ENCODE measurements at regions of chr9 and their contacts with region 1.

Region 1: DNA sequence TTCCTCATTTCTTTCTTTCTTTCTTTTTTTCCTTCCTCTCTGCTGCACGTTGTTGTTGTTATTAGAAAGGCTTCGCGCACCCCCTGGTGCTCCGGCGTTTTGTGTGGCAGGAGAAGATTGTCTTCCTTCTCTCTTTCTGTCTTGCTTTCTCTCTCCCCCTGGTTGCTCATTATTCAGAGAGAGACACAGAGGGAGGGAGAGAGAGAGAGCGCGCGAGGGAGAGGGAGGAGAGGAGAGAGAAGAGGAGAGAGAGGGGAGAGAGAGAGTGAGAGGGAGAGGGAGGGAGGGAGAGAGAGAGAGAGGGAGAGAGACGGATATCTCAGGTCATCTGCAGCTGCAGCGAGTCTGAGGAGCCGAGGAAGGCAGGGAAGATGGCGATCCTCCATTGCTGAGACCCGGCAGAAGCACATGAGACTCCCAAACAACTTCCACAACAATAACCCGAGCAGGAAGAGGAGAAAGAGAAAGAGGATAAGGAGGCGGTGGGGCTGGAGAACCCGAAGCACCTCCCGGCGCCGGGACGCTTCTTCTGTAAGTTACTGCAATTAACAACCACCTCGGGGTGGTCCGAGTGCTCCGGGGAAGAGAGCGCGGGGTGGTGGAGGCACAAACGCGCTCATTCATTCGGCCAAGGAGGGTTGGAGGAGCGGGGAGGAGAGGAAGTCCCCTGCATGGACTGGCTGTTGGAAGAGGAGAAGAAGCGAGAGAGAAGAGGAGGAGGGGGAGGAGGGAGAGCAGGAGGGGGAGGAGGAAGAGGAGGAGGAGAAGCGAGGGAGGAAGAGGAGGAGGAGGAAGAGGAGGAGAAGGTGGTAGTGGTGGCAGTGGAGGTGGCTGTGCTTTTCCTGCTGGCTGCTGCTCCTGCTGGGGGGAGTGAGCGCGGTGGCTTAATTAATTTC is at the start of gene ZNF462:
- DNase-seq: peak; percentile 81
- H3K4me3 ChIP-seq: peak within 1 kb of the TSS; percentile 69 to 74 (median 72)
- H3K27ac ChIP-seq: peak within 1 kb of the TSS; percentile 85 to 91 (median 88)
- H3K4me1 ChIP-seq: peaks cover 0 to 32% (median 21%) of the 10 kb centered on the region in 4 donors
- H3K27me3 ChIP-seq: no peaks in the 10 kb centered on the region
- CTCF ChIP-seq: peak; percentile 19 to 91 (median 78)
- EP300 ChIP-seq: no peak
- POLR2A ChIP-seq: no peak
- total RNA-seq, gene ZNF462: 21.7 to 33.8 (median 25.6) TPM

Region 2: DNA sequence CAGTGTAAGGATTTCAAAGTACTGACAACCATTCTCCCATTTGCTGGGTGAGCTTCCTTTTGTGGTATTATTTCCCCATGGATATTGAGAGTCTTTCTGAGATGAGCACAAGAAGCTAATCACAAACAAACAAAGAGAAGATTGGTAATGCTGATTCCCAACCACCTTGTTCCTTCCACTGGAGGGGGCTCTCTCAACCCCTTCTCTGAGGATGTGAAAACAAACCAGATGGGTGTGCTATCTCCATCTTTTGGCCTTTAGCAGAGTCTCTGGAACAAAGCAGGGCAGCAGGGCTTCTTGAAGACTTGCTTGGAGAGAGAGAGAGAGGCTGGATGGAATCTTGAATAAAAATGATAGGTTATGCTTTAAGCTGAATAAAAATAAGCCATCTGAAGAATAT is 576.8 kb before region 1 on chr9:
- intact Hi-C with region 1: loop called (anchors 10 kb)
- DNase-seq: no peak
- H3K4me3 ChIP-seq: no peak overlapping the region
- H3K27ac ChIP-seq: peak overlapping the region in 3 of 4 donors; percentile 68 to 70 (median 70)
- H3K4me1 ChIP-seq: peaks cover 0 to 22% (median 18%) of the 10 kb centered on the region in 4 donors
- H3K27me3 ChIP-seq: no peaks in the 10 kb centered on the region
- CTCF ChIP-seq: no peak
- EP300 ChIP-seq: no peak
- POLR2A ChIP-seq: no peak

Region 3: DNA sequence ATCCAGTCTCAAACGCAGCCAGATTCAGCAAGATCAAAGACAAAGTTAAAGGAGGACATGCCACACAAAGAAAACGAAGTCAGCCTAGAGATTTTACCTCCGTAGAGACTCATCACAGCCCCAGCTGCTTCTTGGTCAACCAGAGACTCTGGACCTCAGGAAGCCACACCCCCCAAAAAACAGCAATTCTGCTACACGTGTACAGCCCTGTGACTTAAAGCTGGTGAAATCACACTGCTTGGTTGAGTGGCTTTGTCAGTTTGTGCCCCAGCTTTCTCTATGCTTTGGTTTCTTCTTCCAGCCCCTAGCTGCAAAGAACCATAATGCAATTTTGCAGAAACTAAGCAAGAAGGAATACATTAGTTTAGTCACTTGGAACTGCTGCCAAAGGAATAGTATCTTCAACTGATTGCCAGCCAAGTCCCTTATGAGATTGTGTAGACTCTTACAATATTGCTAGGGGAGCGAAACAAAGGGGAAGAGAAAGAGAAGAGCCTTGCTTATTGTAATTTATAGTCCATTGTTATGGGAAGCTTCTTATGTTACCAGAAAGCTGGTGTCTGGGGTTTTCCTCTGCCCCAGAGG is 158.9 kb before region 1 on chr9:
- intact Hi-C with region 1: loop called (anchors 5 kb)
- DNase-seq: no peak
- H3K4me3 ChIP-seq: no peak overlapping the region
- H3K27ac ChIP-seq: no peak overlapping the region
- H3K4me1 ChIP-seq: peaks cover 0 to 19% (median 13%) of the 10 kb centered on the region in 4 donors
- H3K27me3 ChIP-seq: no peaks in the 10 kb centered on the region
- CTCF ChIP-seq: no peak
- EP300 ChIP-seq: no peak
- POLR2A ChIP-seq: no peak

Region 4: DNA sequence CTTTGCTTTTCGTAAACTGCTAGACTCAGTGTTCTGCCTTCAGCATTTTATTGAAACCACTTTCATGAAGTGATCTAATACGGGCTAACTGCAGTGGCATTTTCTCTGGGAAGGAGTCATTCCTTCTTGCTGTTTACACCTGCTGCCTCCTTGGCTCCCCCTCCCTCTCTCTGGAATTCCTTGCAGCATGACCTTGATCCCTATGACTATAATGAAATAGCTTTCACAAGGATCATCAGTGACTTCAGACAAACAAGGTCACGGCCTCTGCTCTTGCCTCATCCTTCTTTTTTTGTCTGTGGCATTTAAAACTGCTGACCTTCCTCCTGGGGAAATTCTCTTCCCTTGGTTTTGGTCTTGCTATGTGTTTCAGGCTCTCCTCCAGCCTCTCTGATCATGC is 90.1 kb after region 1 on chr9:
- intact Hi-C with region 1: loop called (anchors 10 kb)
- DNase-seq: no peak
- H3K4me3 ChIP-seq: no peak overlapping the region
- H3K27ac ChIP-seq: no peak overlapping the region
- H3K4me1 ChIP-seq: peaks cover 0 to 31% (median 18%) of the 10 kb centered on the region in 4 donors
- H3K27me3 ChIP-seq: no peaks in the 10 kb centered on the region
- CTCF ChIP-seq: no peak
- EP300 ChIP-seq: no peak
- POLR2A ChIP-seq: no peak

Region 5: GRCh38 chr9:107044872-107045271 is 181.8 kb after region 1 on chr9:
- intact Hi-C with region 1: loop called (anchors 5 kb)
- DNase-seq: no peak
- H3K4me3 ChIP-seq: no peak overlapping the region
- H3K27ac ChIP-seq: no peak overlapping the region
- H3K4me1 ChIP-seq: peaks cover 0 to 9% (median 3%) of the 10 kb centered on the region in 4 donors
- H3K27me3 ChIP-seq: no peaks in the 10 kb centered on the region
- CTCF ChIP-seq: no peak
- EP300 ChIP-seq: no peak
- POLR2A ChIP-seq: no peak